MCF 10A (cell line): ENCODE measurements at regions of chr2 and their contacts with region 1.

Region 1: DNA sequence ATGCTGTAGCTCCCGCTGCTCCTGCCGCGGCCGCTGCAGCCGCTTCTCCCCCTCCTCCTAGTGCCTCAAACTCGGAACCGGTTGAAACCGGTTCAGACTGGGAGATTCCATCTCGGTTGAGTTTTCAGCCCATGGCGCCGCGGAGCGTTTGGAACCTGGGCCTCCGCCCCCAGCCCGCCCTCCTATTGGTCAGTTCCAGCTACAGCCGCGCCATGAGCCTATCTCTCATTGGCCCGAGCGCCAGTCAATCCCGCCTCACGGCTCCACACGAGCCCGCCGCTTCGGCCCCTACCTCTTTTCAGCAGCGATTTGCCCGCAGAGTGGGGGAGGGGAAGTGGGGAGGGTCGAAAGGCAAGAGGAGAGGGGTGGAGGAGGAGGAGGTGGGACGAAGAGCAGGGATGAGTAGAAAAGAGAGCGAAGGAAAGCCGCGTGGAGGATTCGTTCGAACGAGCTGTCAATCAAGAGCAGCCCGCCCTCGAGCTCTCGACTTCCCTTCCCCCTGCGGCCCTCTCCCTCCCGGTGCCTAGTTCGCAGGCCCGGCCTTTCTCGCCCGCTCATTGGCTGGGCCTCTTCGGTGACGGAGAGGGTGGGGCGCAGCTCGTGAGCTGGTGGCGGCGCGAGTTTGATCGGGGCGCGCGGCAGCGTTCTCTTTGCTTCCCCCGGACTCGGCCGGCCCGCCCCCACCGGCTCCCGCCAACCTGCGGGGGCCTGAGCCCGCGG is at the start of gene XPO1:
- DNase-seq: peak; percentile 100
- H3K4me3 Mint-ChIP-seq: peak within 1 kb of the TSS; percentile 88
- H3K27ac Mint-ChIP-seq: peak within 1 kb of the TSS; percentile 97
- H3K4me1 Mint-ChIP-seq: peaks cover 5% of the 10 kb centered on the region
- H3K27me3 Mint-ChIP-seq: no peaks in the 10 kb centered on the region
- CTCF ChIP-seq: no peak
- total RNA-seq, gene XPO1: 131 and 148 TPM in 2 replicates

Region 2: DNA sequence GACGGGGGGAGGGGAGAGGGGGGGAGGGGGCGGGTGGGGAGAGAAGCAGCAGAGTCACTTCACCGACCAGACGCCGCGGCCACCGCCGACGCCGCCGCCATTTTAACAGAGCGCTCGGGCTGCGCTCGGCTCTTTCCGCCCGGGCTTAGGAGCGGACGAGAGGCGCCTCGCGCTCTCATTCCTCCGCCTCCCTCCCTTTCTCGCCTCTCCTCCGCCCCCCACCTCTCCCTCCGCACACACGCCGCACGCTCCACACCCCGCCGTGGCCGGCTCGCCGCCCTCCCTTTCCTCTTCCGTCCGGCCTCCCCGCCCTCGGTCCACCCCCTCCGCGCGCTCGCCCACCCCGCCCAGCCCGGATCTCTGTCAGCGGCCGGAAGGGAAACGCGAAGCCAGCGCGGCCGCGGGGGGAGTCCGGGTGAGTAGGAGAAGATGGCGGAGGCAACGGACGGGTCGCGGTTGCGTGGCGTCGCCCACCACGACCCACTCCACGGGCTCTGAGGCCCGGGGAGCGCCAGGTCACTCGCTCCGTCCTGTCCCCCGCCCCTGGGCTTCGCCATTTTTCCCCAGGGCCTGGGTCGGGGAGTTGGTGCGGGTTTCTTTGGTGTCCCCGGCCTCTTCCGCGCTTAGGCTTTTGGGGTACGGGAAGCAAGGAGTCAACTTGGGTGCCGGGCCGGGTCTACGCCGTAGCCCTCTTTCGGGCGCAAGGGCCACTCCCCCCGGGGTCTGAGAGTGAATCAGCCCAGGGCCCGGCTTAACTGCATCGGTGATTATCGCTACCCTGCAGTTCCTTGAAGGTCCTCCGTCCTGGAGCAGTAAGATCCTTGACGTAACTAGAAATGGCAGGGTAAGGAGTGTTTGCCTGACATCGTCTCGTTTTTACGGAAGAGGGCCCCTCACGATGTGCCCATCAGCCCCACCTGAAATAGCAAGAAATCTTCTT is 67.1 kb before region 1 on chr2 and contains the start of gene USP34:
- CTCF ChIA-PET with region 1: interaction called, 3 read pairs
- POLR2A ChIA-PET with region 1: interaction called, 31 read pairs
- intact Hi-C with region 1: no loop called
- DNase-seq: peak; percentile 94
- H3K4me3 Mint-ChIP-seq: peak within 1 kb of the TSS; percentile 79
- H3K27ac Mint-ChIP-seq: peak within 1 kb of the TSS; percentile 97
- H3K4me1 Mint-ChIP-seq: peaks cover 8% of the 10 kb centered on the region
- H3K27me3 Mint-ChIP-seq: no peaks in the 10 kb centered on the region
- CTCF ChIP-seq: no peak
- total RNA-seq, gene USP34: 101 and 105 TPM in 2 replicates

Region 3: GRCh38 chr2:61549546-61549945 is 11.2 kb after region 1 on chr2:
- CTCF ChIA-PET with region 1: interaction called, 3 read pairs
- POLR2A ChIA-PET with region 1: interaction called, 13 read pairs
- intact Hi-C with region 1: no loop called
- DNase-seq: no peak
- H3K4me3 Mint-ChIP-seq: no peak overlapping the region
- H3K27ac Mint-ChIP-seq: no peak overlapping the region
- H3K4me1 Mint-ChIP-seq: no peaks in the 10 kb centered on the region
- H3K27me3 Mint-ChIP-seq: no peaks in the 10 kb centered on the region
- CTCF ChIP-seq: no peak

Region 4: DNA sequence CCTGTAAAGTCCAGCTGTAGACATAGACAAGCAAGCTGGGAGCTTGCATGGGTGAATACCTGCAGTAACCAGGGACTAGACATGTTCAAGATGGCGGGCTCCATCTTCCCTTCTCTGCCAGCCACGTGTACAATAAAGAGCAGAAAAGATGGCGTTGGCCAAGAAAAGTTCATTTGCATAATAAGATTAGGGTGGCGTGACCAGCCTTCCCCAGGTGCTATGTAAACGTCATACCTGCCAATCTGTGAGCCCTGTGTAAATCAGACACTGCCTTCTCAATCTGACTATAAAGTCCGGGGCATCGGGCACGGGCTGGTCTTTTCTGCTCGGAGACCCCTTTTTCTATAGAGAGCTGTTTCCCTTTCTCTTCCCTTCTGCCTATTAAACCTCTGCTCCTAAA is 101.4 kb after region 1 on chr2:
- CTCF ChIA-PET with region 1: interaction called, 3 read pairs
- POLR2A ChIA-PET with region 1: interaction called, 4 read pairs
- intact Hi-C with region 1: loop called (anchors 2 kb)
- DNase-seq: no peak
- H3K4me3 Mint-ChIP-seq: no peak overlapping the region
- H3K27ac Mint-ChIP-seq: no peak overlapping the region
- H3K4me1 Mint-ChIP-seq: peaks cover 6% of the 10 kb centered on the region
- H3K27me3 Mint-ChIP-seq: no peaks in the 10 kb centered on the region
- CTCF ChIP-seq: no peak

Region 5: GRCh38 chr2:61764035-61764800 is 225.9 kb after region 1 on chr2:
- CTCF ChIA-PET with region 1: no interaction called
- POLR2A ChIA-PET with region 1: interaction called, 47 read pairs
- intact Hi-C with region 1: loop called (anchors 1 kb)
- DNase-seq: peak; percentile 98
- H3K4me3 Mint-ChIP-seq: peak overlapping the region; percentile 95
- H3K27ac Mint-ChIP-seq: peak overlapping the region; percentile 100
- H3K4me1 Mint-ChIP-seq: peaks cover 16% of the 10 kb centered on the region
- H3K27me3 Mint-ChIP-seq: no peaks in the 10 kb centered on the region
- CTCF ChIP-seq: no peak